Head of caudate nucleus (tissue), 42 donors: ENCODE measurements at regions of chr3 and their contacts with region 1.

Region 1: GRCh38 chr3:99833617-99834205 is 16.0 kb downstream of the CMSS1 start:
- DNase-seq: no peak

Region 2: GRCh38 chr3:99774467-99774866 is 59.2 kb before region 1 on chr3:
- intact Hi-C with region 1: no loop called
- DNase-seq: no peak

Region 3: GRCh38 chr3:100006570-100007271 is 173.0 kb after region 1 on chr3:
- intact Hi-C with region 1: no loop called
- DNase-seq: no peak

Region 4: GRCh38 chr3:100254168-100254777 is 420.6 kb after region 1 on chr3:
- intact Hi-C with region 1: loop called (anchors 5 kb)
- DNase-seq: peak in 41 of 42 donors; percentile 9 to 80 (median 45)

Region 5: DNA sequence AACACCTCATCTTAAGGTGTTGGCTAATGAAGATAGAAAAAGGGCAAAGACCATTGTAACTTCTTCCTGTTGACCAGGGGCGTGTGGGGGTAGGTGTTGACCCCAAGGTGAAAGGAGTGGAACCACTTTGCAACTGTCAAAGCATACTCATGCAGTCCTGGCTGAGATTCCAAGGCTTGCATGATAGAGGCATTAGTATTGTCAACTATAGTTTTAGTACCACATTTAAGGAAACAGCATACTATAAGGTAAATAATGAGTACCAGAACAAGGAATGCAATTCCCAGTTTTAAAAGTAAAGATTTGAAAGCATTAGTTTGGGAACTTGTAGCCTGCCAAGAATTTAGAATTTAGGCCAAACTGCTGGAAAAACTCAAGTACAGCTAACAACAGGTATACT is 747.9 kb after region 1 on chr3:
- intact Hi-C with region 1: loop called (anchors 10 kb)
- DNase-seq: no peak